ENCODE measurements at regions of chr9 and their contacts with region 1.

Region 1: DNA sequence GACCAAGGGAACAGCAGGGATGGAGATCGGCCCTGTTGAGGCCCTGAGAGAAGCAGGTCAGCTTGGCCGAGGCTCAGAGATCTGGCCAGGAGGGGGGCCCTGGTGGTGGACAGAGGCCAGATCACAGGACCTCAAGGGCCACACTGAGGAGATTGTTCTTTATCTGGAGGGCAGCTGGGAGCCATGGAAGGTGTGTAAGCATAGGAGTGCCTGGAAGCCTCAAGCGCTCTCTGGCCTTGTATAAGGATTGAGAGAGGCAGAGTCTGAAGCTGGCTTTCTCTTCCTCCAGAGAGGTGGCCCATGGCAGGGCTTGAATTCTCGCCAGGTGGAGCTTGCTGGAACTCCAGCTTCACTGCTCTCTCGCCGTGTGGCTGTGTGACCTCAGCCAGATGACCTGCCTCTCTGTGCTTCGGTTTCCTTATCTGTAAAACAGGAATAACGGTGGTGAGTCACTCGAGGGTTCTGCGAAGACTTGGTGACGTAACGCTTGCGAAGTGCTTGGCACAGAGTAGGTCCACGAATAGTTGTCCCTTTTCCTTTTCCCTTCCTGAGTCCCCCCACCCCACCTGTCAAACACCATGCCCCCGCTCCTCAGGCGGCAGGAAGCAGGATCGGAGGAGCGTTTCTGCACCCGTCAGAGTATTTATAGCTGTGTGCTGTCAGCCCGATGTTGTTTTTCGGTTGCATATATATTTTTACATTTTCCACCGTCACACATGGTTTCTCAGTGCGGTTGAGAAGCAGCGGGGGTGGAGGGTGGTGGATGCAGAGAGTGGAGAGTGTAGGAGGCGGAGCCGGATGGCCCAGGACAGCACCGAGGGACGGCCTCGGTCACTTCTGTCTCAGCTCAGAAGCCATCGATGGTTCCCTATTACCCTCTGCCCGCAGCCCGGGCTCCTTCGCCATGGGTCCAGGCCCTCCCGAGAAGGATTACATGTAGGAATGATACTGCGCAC is 17.0 kb upstream of the CRB2 start:
- DNase-seq: peak; percentile 88
- H3K4me3 Mint-ChIP-seq: peak overlapping the region; percentile 80
- H3K27ac Mint-ChIP-seq: peak overlapping the region; percentile 95
- H3K4me1 Mint-ChIP-seq: peaks cover 34% of the 10 kb centered on the region
- H3K27me3 Mint-ChIP-seq: no peaks in the 10 kb centered on the region

Region 2: GRCh38 chr9:122865300-122865699 is 473.7 kb before region 1 on chr9:
- CTCF ChIA-PET with region 1: no interaction called
- POLR2A ChIA-PET with region 1: no interaction called
- intact Hi-C with region 1: no loop called
- DNase-seq: no peak
- H3K4me3 Mint-ChIP-seq: no peak overlapping the region
- H3K27ac Mint-ChIP-seq: no peak overlapping the region
- H3K4me1 Mint-ChIP-seq: peaks cover 3% of the 10 kb centered on the region
- H3K27me3 Mint-ChIP-seq: no peaks in the 10 kb centered on the region

Region 3: DNA sequence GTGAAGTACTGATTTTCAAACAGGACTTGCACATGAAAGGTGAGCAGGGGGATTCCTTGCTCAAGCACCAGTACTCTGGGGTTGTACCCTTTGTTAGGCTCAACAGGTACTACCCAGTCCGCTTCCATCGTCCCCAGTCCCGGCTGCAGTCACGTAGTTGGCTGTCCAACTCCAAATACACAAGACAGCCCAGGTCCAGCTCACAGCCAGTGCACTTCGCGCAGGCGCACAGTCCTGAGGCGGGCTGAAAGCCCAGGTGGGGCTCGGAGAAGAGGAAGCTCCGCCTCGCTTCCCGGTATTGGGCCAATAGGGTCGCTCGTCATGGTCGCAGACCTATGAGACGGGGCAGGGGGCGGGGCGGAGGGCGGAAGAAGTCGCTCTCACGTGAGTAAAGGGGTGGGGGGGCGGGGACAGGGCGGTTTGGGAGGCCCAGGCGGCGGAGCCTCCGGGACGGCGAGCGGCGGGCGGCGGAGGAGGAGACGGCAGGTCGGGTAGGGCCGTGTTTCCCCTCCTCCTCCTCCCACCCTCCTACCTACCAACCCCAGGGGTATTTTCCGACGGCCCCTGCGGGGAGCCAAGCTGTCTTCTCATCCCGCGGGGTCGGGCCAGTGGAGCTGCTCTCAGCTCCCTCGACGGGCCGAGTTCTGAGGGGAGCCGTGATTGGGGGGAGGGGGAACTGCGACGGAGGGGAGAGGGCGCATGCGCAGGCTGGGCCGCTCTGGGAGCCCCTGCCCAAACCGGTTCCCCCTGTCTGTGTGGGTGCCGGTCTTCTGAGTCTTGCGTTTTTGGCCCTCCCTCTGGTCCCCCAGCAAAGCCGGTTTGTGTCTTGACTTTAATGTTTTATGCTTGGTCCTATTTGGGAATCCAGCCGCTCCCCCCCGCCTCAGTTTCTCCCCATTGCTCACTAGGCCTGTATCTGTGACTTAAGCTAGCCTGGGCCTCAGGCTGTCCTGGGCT is 398.1 kb before region 1 on chr9 and contains the start of gene RABGAP1:
- CTCF ChIA-PET with region 1: no interaction called
- POLR2A ChIA-PET with region 1: no interaction called
- intact Hi-C with region 1: loop called (anchors 2 kb)
- DNase-seq: peak; percentile 99
- H3K4me3 Mint-ChIP-seq: peak within 1 kb of the TSS; percentile 94
- H3K27ac Mint-ChIP-seq: peak within 1 kb of the TSS; percentile 84
- H3K4me1 Mint-ChIP-seq: peaks cover 35% of the 10 kb centered on the region
- H3K27me3 Mint-ChIP-seq: no peaks in the 10 kb centered on the region
- total RNA-seq, gene RABGAP1: 27.1 to 28.8 TPM

Region 4: GRCh38 chr9:123268240-123268949 is 70.6 kb before region 1 on chr9 and contains the start of gene STRBP:
- CTCF ChIA-PET with region 1: interaction called, 3 read pairs
- POLR2A ChIA-PET with region 1: interaction called, 4 read pairs
- intact Hi-C with region 1: loop called (anchors 1 kb)
- DNase-seq: peak; percentile 93
- H3K4me3 Mint-ChIP-seq: peak within 1 kb of the TSS; percentile 69
- H3K27ac Mint-ChIP-seq: no peak within 1 kb of the TSS
- H3K4me1 Mint-ChIP-seq: peaks cover 18% of the 10 kb centered on the region
- H3K27me3 Mint-ChIP-seq: no peaks in the 10 kb centered on the region
- total RNA-seq, gene STRBP: 27.5 to 29.1 TPM

Region 5: GRCh38 chr9:123305879-123306278 is 33.1 kb before region 1 on chr9:
- CTCF ChIA-PET with region 1: no interaction called
- POLR2A ChIA-PET with region 1: interaction called, 3 read pairs
- intact Hi-C with region 1: loop called (anchors 1 kb)
- DNase-seq: no peak
- H3K4me3 Mint-ChIP-seq: no peak overlapping the region
- H3K27ac Mint-ChIP-seq: no peak overlapping the region
- H3K4me1 Mint-ChIP-seq: peaks cover 12% of the 10 kb centered on the region
- H3K27me3 Mint-ChIP-seq: peaks cover 2% of the 10 kb centered on the region

Region 6: GRCh38 chr9:123322273-123323195 is 16.5 kb before region 1 on chr9:
- CTCF ChIA-PET with region 1: interaction called, 5 read pairs
- POLR2A ChIA-PET with region 1: interaction called, 18 read pairs
- intact Hi-C with region 1: loop called (anchors 1 kb)
- DNase-seq: peak; percentile 79
- H3K4me3 Mint-ChIP-seq: peak overlapping the region; percentile 14
- H3K27ac Mint-ChIP-seq: peak overlapping the region; percentile 81
- H3K4me1 Mint-ChIP-seq: peaks cover 23% of the 10 kb centered on the region
- H3K27me3 Mint-ChIP-seq: no peaks in the 10 kb centered on the region

Region 7: DNA sequence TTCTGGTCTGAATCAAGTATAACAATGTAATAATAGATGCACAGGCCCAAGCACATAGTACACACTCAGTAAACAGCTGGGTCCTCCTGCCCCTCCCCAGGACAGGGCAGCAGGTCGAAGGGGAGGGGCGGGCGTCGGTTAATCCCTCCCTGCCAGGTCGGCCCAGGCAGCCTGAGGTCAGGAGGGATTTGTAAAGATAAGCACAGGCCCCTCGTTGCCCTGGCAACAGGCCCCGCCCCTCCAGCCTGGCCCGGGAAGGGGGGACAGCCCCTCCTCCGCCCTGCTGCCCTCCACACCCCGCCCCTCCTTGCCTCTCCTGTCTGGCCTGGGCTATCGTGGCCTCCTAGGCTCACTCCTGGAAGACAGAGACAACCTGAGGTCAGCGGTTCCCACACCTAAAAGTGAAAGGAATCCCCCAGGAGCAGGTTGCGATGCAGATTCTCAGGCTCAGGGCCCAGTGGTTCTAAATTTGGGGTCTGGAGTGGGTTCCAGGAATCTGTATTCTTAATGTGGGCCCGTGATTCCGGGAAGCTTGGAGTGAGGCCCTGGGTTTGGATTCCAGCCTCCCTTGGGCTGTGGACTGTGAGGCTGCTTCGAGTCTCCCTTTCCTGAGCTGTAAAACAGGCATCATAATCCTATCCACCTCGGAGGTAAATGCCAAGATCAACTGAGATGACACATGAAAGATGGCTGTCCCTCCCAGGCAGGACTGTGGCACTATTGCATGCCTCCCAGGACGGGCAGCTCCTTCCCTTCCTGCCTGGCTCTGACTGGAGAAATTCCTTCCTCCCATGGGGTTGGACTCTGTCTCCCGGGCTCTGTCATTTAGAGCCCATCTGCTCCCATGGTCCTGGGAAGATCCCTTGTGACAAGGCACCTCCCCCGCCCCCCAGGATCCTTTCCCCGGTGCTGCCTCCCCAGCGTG is 21.4 kb after region 1 on chr9:
- CTCF ChIA-PET with region 1: no interaction called
- POLR2A ChIA-PET with region 1: no interaction called
- intact Hi-C with region 1: no loop called
- DNase-seq: peak; percentile 33
- H3K4me3 Mint-ChIP-seq: no peak overlapping the region
- H3K27ac Mint-ChIP-seq: no peak overlapping the region
- H3K4me1 Mint-ChIP-seq: peaks cover 5% of the 10 kb centered on the region
- H3K27me3 Mint-ChIP-seq: peaks cover 2% of the 10 kb centered on the region

Region 8: DNA sequence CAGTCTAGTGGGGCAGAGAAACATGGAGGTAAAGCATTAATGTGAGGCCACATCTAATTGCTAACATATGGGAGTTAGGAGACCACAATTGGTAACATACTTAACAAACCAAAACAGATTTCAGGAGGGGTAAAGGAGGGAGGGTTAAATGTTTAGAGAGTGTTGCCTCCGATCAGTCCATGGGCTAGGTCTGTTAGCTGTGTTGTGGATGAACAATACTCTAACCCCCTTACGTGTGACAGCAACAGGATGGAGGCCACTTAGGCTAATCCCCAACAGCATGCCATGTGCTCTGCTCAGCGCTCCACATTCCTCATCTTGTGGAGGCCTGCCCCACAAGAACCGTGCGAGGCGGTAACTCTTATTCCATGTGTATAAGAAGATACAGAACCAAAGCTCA is 184.0 kb after region 1 on chr9:
- CTCF ChIA-PET with region 1: no interaction called
- POLR2A ChIA-PET with region 1: no interaction called
- intact Hi-C with region 1: no loop called
- DNase-seq: no peak
- H3K4me3 Mint-ChIP-seq: no peak overlapping the region
- H3K27ac Mint-ChIP-seq: no peak overlapping the region
- H3K4me1 Mint-ChIP-seq: no peaks in the 10 kb centered on the region
- H3K27me3 Mint-ChIP-seq: no peaks in the 10 kb centered on the region